Common myeloid progenitor, CD34-positive (primary cell): ENCODE measurements at regions of chr2 and their contacts with region 1.

Region 1: DNA sequence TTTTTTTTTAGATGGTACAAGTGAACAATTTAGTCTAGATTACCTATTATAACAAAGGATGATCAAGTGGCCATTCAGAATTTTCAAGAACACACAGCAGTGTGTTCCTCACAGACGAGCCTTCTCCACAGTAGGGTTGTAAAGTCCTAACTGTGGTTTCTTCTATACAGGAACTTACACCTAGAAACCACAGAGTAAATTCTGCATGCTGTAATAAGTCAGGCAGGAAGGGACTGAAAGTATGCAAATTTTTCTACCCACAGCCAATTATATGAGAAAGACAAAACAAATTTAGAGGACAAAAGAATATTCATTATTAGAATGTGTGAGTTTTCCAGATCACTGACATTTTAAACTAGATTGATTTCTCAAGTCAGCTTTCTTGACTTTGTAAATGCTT is 99.5 kb downstream of the RBMS1 start:
- DNase-seq: peak in 2 of 3 donors; percentile 81 to 88
- H3K4me3 ChIP-seq: peak overlapping the region in 3 of 7 experiments; percentile 3 to 40 (median 26)
- H3K27ac ChIP-seq: peak overlapping the region in 1 of 2 experiments; percentile 27
- H3K4me1 ChIP-seq: peaks cover 12 to 71% (median 25%) of the 10 kb centered on the region in 4 experiments
- H3K27me3 ChIP-seq: no peaks in the 10 kb centered on the region

Region 2: DNA sequence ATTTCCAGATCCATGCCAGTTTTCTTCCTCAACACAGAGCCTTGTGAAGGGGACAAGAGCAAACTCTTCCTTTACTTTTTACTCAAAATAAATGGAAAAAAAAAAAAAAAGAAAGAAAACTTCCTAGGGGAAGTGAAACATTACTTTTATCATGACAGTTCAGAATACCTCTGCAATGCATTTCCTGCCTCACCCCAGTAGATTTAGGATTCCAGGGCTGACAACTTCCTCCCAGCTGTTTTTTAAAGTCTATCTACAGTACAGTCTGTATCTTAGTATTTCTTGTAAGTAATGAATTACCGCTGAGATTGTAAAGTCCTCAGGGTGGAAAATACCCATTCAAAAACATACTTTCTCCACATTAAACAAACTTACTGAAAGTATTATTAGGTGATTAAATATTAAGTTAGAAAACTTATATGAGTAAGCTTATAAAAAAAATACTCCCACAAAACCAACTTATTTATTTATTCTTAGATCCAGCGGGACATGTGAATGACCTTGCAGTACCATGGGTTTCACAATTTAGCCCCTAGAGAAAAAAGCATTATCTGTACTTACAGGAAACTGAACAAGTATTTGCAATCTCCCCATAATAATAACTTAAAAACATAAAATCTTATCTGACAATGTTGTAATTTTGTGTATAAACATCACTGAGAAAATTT is 18.2 kb before region 1 on chr2:
- CTCF ChIA-PET with region 1: interaction called, 14 read pairs
- POLR2A ChIA-PET with region 1: no interaction called
- DNase-seq: peak; percentile 38 to 84 (median 70)
- H3K4me3 ChIP-seq: peak overlapping the region in 1 of 7 experiments; percentile 7
- H3K27ac ChIP-seq: no peak overlapping the region
- H3K4me1 ChIP-seq: peaks cover 27 to 91% (median 61%) of the 10 kb centered on the region in 4 experiments
- H3K27me3 ChIP-seq: no peaks in the 10 kb centered on the region

Region 3: DNA sequence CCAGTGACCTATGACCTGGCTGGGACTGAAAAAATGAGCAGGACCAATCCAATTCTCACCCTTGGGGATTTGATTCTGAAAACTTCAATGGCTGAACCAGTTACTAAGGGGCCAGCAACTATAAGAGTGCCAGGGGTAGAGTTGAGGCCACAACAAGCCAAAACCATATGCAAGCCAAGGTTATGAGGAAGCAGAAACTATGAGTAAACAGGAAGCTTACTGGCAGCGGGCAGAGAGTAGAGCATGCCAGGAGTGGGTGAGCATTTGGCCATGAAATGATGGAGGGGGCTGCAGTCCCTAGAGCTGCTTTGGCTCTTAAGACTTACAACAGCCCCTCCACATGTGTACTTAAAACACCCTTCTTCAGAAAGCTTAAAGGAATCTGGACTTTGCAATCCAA is 17.0 kb after region 1 on chr2:
- CTCF ChIA-PET with region 1: no interaction called
- POLR2A ChIA-PET with region 1: no interaction called
- DNase-seq: peak in 2 of 3 donors; percentile 73 to 81
- H3K4me3 ChIP-seq: peak overlapping the region in 1 of 7 experiments; percentile 32
- H3K27ac ChIP-seq: no peak overlapping the region
- H3K4me1 ChIP-seq: peaks cover 16 to 34% (median 29%) of the 10 kb centered on the region in 4 experiments
- H3K27me3 ChIP-seq: no peaks in the 10 kb centered on the region